Activated CD4-positive, alpha-beta memory T cell treated with anti-CD3 and anti-CD28 coated beads, Interleukin-2, amount 10 ng/mL, durations not matched to agents 7 days and 5 days (primary cell): ENCODE measurements at regions of chr22 and their contacts with region 1.

Region 1: DNA sequence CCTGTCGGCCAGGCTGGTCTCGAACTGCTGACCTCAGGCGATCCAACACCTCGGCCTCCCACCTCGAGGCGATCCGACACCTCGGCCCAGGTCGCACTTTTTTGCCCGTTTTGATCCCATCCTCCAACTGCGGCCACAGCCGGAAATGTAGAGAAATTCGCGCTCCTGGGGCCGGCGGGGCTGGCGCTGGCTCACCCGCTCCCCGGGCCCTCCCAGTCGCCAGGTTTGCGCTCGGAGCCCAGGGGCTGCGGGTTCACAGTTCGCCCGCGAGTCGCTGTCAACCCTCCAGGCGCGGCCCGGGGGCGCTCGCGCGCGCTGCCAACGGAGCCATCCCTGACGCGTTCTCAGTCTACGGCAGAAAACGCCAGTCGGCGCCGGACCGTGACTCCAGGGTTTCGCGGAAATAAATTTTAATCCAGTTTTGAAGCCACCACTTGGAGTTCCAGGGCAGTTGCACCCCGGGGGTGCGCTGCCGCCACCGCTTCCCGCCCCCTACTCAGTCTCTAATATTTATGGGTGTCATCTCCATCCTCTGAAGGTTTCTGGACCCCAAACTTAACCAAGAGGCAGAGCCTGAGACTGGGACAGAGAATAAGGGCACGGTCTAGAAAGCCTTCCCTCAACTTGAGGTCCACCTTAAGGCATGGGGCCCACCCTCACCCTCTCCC is 1.5 kb upstream of the KLHDC7B start:
- DNase-seq: peak; percentile 90
- H3K4me3 Mint-ChIP-seq: peak overlapping the region; percentile 63
- H3K27ac Mint-ChIP-seq: peak overlapping the region; percentile 75
- H3K4me1 Mint-ChIP-seq: peaks cover 63% of the 10 kb centered on the region
- H3K27me3 Mint-ChIP-seq: no peaks in the 10 kb centered on the region

Region 2: GRCh38 chr22:50530877-50531545 is 13.2 kb before region 1 on chr22:
- CTCF ChIA-PET with region 1: interaction called, 150 read pairs
- POLR2A ChIA-PET with region 1: interaction called, 583 read pairs
- DNase-seq: peak; percentile 90
- H3K4me3 Mint-ChIP-seq: peak overlapping the region; percentile 95
- H3K27ac Mint-ChIP-seq: peak overlapping the region; percentile 98
- H3K4me1 Mint-ChIP-seq: peaks cover 53% of the 10 kb centered on the region
- H3K27me3 Mint-ChIP-seq: no peaks in the 10 kb centered on the region

Region 3: DNA sequence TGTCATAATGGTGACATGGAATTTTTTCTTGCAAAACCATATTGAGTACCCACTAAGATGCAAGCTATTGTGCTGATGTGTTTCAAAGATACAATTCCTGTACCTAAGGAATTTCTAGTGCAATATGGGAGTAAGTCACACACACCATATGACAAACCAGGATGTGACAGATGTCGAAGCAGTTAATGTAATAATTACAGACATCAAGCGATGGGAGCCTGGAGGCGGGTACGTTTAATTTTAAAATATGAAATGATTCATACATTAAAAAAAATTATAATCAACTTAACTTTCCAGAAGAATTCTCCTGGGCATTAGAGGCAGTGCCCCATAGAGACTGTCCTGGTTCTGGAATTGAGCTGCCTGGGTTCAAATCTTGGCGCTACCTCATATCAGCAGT is 12.5 kb after region 1 on chr22:
- CTCF ChIA-PET with region 1: interaction called, 9 read pairs
- POLR2A ChIA-PET with region 1: interaction called, 109 read pairs
- DNase-seq: no peak
- H3K4me3 Mint-ChIP-seq: no peak overlapping the region
- H3K27ac Mint-ChIP-seq: no peak overlapping the region
- H3K4me1 Mint-ChIP-seq: peaks cover 10% of the 10 kb centered on the region
- H3K27me3 Mint-ChIP-seq: peaks cover 20% of the 10 kb centered on the region

Region 4: DNA sequence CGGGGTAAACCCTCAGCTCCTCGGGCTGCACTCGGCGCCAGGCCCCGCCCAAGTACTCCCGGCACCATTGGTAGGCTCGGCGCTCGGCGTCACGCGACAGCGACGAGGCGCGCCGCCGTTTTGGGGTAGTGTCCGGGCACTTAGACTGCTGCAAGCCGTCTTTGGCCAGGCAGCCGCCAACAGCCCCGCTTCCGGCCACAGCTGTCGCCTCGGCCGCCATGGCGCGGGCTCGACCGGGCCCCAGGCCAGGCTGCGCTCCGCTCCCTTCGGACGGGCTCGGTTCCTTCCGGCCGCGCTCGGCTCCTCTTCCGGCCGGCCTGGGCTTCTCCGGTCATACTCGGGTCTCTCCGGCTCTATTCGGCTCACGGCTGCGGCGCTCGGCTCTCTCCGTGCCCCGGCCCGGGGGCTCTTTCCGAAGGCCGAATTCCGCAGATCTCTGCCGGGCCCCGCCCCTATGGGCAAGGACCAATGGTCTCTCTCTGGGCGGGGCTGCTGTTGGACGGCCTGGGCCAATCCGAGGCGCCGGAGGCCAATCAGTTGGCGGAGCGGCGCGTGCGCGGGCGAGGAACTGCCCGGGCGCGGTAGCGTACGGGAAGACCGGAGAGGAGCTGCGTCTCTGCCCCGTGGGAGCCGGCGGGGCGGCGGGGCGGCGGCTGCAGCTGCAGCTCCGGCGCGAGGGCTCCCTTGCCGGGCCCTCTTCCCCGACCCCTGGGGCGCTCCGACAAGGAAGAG is 38.5 kb after region 1 on chr22 and contains the start of gene CHKB:
- CTCF ChIA-PET with region 1: interaction called, 6 read pairs
- POLR2A ChIA-PET with region 1: interaction called, 30 read pairs
- DNase-seq: peak; percentile 99
- H3K4me3 Mint-ChIP-seq: peak within 1 kb of the TSS; percentile 81
- H3K27ac Mint-ChIP-seq: peak within 1 kb of the TSS; percentile 93
- H3K4me1 Mint-ChIP-seq: peaks cover 34% of the 10 kb centered on the region
- H3K27me3 Mint-ChIP-seq: no peaks in the 10 kb centered on the region
- total RNA-seq, gene CHKB: 101 to 111 TPM